Activated CD4-positive, alpha-beta T cell treated with anti-CD3 and anti-CD28 coated beads for 36 hours (primary cell): ENCODE measurements at regions of chr17 and their contacts with region 1.

Region 1: GRCh38 chr17:38667099-38667786 is 7.5 kb downstream of the EPOP start:
- DNase-seq: peak; percentile 75
- ATAC-seq: peak; percentile 75
- H3K4me3 Mint-ChIP-seq: no peak overlapping the region
- H3K27ac Mint-ChIP-seq: no peak overlapping the region
- H3K4me1 Mint-ChIP-seq: peaks cover 14% of the 10 kb centered on the region
- H3K27me3 Mint-ChIP-seq: peaks cover 37% of the 10 kb centered on the region

Region 2: DNA sequence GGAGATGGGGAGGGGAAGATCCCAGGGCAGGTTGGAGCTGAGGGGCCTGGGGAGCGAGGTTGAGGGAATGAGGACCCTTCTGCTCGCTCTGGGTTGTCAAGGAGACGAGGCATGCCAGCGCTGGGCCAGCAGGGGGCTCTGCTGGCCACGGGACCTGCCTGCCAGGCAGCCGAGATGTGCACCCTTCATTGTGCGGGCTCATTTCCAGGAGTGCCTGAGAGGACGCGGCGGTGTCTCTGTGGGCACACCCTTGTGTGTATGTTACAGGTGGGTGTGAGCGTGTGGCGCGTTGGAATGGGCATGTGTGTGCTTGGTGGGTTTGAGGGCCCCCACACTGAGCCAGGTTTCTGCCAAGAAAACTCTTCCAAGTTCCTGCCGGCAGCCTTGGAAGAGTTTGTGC is 223.1 kb before region 1 on chr17:
- CTCF ChIA-PET with region 1: no interaction called
- POLR2A ChIA-PET with region 1: no interaction called
- intact Hi-C with region 1: loop called in 1 of 2 experiments (anchors 5 kb)
- DNase-seq: peak; percentile 81
- ATAC-seq: peak; percentile 93
- H3K4me3 Mint-ChIP-seq: no peak overlapping the region
- H3K27ac Mint-ChIP-seq: no peak overlapping the region
- H3K4me1 Mint-ChIP-seq: peaks cover 6% of the 10 kb centered on the region
- H3K27me3 Mint-ChIP-seq: peaks cover 3% of the 10 kb centered on the region

Region 3: DNA sequence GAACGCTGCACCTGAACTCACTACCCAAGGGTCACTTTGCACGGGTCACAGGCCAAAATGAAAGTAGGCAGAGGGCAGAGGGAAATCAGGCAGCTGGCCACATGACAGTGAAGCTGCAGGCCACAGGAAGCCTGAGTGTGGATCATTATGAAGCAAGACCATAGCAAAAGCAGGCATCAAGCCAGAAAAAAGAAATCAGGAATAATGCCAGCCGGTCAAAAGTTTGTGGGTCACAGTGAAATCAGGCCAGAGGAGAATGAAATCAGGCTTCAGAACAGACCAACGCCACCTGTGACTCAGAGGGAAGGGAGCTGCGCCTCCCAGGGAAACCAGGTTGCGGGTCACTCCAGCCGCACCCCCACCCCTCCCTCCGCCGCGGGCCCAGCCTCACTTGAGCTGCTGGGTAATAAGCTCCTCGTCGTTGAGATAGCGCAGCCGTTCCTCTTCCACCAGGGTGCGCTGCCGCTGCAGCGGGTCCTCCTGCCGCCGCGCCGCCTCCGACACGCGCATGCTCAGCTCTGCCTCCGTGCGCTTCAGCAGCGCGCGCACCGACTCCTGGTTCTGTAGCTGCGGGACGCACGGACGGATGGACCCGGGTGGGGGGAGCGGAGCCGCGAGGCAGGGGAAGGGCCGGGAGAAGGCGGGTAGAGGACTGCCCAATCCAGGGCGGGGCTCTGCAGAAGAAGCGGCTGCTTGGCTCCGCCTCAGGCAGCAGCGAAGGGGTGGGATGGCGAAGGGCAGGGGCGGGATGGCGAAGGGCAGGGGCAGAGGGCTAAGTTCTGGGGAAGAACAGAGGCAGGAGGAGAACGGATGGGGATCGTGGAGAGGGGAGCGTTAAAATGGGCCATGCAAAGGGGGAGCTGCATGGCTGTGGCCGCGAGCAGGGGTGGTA is 109.2 kb before region 1 on chr17:
- CTCF ChIA-PET with region 1: interaction called, 145 read pairs
- POLR2A ChIA-PET with region 1: interaction called, 4 read pairs
- intact Hi-C with region 1: loop called (anchors 1 kb)
- DNase-seq: peak; percentile 95
- ATAC-seq: peak; percentile 85
- H3K4me3 Mint-ChIP-seq: peak overlapping the region; percentile 73
- H3K27ac Mint-ChIP-seq: no peak overlapping the region
- H3K4me1 Mint-ChIP-seq: peaks cover 22% of the 10 kb centered on the region
- H3K27me3 Mint-ChIP-seq: peaks cover 23% of the 10 kb centered on the region

Region 4: DNA sequence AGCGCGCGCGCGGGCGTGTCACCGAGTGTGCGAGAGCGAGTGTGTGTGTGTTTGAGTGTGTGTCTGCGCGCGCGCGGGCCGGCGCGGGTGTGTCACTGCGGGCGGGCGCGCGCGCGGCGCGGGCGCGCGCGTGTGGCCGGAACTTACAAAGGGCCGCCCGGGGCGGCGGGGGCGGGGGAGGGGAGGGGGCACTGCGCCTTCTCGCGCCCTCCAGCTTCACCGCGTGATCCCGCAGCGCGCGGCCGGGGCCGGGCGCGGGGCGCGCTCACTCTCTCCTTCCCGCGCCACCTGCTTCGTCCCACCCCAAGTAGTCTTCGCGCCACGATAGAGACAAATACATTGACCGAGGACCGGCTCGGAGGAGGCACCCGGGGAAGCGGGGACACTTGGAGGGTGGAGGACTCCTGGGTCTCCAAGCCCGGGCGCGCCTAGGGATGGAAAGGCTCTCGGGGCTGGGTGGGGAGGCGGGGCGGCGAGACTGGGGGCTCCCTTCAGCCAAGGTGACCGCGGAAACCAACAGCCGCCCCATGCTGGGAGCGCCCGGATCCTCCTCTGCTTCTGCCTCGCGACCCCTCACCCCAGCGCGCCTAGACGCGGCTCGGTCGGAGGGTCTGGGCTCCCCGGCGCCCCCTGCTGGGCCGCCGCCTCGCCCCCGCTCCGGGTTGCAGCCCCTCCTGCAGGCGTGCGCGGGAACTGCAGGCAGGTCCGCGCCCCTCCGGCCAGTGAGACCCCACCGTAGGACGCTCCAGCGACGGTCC is 61.2 kb before region 1 on chr17 and contains the start of gene SRCIN1:
- CTCF ChIA-PET with region 1: interaction called, 8 read pairs
- POLR2A ChIA-PET with region 1: interaction called, 4 read pairs
- intact Hi-C with region 1: loop called (anchors 1 to 5 kb)
- DNase-seq: peak; percentile 79
- ATAC-seq: peak; percentile 42
- H3K4me3 Mint-ChIP-seq: peak within 1 kb of the TSS; percentile 66
- H3K27ac Mint-ChIP-seq: no peak within 1 kb of the TSS
- H3K4me1 Mint-ChIP-seq: peaks cover 16% of the 10 kb centered on the region
- H3K27me3 Mint-ChIP-seq: peaks cover 56% of the 10 kb centered on the region
- total RNA-seq, gene SRCIN1: 0.72 to 0.73 TPM

Region 5: DNA sequence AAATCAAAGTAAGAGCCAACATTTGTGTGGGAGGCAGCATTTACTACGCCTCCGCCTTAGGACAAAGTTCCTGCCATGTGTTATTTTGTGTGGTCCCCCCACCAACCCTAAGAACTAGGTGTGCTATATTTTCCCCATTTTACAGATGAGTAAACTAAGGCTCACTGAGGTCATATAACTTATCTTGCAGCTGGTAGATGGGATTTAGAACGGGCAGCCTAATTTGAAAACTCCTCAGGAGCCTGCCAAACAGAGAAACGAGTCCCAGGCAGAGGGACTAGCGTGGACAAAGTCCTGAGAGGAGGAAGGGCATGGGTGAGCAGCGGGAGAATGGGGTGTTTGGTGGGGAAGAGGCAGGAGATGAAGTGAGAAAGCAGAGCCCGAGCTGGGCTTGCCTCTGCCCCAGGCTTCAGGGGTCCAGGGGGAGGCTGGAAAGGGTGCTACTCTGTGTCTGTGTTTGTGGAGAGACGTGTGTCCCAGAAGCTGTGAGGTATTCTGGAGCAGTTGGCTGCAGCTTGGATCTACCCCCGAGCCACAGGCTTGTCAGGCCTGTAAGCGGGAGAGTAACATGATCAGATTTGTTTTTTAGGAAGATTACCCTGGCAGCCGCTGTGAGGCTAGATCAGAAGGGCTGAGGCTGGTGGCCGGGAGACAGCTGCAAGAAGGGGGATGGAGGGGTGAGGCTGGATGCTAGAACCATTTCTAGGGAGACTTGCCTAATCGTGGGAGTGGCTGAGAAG is 42.8 kb after region 1 on chr17:
- CTCF ChIA-PET with region 1: interaction called, 10 read pairs
- POLR2A ChIA-PET with region 1: interaction called, 3 read pairs
- intact Hi-C with region 1: no loop called
- DNase-seq: no peak
- ATAC-seq: no peak
- H3K4me3 Mint-ChIP-seq: no peak overlapping the region
- H3K27ac Mint-ChIP-seq: peak overlapping the region; percentile 77
- H3K4me1 Mint-ChIP-seq: peaks cover 75% of the 10 kb centered on the region
- H3K27me3 Mint-ChIP-seq: no peaks in the 10 kb centered on the region

Region 6: DNA sequence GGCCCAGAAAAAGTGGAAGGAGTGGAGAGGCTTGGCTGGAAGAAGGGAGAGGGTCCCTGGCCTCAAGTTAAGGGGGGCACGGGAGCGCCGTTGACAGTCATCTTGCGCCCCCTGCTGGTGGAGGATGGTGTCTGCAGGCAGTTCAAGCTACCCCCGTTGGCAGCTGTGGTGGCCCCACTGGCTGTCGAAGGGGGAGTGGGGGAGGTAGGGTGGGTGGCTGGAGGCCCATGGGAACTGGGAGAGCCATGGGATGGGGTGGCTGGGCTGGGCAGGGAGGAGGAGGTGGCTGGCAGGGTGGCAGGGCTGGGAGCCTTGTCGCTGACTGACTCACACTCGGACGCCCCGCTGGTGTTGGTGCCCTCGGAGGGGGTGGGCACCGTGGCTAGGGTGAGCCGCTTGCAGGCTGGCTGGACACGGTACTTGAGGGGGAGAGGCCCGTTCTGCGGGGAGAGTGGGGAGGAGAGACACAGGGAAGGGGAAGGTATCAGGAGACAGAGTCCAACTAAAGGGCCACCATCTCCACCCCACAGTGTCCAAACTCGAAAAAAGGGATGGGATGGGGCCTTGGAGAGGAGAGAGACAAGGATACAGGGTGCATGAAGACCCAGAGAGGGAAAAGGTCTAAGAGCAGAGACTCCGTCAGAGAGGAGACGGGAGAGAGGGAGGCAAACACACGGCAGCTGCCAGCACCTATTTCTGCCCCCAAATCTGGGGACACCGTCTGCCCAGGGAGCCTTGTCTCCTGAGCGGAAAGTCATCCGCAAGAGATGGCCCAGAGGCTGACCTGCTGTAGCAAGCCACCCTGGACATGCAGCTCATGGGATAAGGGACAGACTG is 68.1 kb after region 1 on chr17:
- CTCF ChIA-PET with region 1: interaction called, 17 read pairs
- POLR2A ChIA-PET with region 1: interaction called, 4 read pairs
- intact Hi-C with region 1: no loop called
- DNase-seq: peak; percentile 85
- ATAC-seq: peak; percentile 21
- H3K4me3 Mint-ChIP-seq: no peak overlapping the region
- H3K27ac Mint-ChIP-seq: no peak overlapping the region
- H3K4me1 Mint-ChIP-seq: peaks cover 45% of the 10 kb centered on the region
- H3K27me3 Mint-ChIP-seq: no peaks in the 10 kb centered on the region